Psoas muscle (tissue), 8 donors: ENCODE measurements at regions of chr15 and their contacts with region 1.

Region 1: DNA sequence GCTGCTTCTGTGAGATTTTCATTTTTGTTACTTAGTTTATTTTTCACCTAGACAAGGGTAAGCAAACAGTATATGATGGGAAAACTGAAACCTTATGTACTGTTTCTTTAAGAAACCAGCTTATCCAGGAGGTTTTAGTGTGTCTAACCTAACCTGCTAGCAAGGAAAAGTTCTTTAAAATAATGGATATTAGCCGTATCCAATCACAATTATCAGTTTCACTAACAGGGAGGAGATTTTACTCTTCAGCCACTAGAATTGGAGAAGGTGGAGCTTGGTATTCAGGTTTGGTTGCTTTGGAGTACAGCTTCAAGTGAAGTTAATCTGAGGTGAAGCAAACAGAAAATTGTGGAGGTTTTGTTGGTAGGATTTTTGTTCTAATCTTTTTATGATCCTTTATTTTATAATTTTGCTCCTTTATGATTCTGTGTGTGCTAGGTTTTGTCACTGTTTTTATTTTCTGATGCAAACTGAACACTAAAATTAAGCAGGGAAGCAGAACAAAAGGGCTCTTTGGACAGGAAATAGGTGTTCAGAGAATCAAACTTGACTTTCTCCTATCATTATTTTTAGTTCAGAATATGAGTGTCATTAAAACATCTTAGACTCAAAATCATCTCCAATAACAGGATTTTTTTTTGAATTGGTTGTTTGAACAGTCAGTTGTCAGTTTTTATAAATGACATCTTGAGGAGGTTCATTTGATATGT is 13.0 kb downstream of the ZFAND6 start:
- DNase-seq: no peak
- ATAC-seq: peak; percentile 93 to 98 (median 97)
- H3K4me3 ChIP-seq: peak overlapping the region; percentile 60
- H3K27ac ChIP-seq: peak overlapping the region; percentile 11
- H3K4me1 ChIP-seq: peaks cover 71% of the 10 kb centered on the region
- H3K27me3 ChIP-seq: no peaks in the 10 kb centered on the region
- CTCF ChIP-seq: no peak

Region 2: GRCh38 chr15:80058851-80059785 is 13.3 kb before region 1 on chr15 and contains the start of gene ZFAND6:
- intact Hi-C with region 1: loop called in 1 of 2 experiments (anchors 1 kb)
- DNase-seq: peak; percentile 95 to 98
- ATAC-seq: peak; percentile 97 to 98 (median 98)
- H3K4me3 ChIP-seq: peak within 1 kb of the TSS; percentile 84
- H3K27ac ChIP-seq: peak within 1 kb of the TSS; percentile 97
- H3K4me1 ChIP-seq: peaks cover 25% of the 10 kb centered on the region
- H3K27me3 ChIP-seq: no peaks in the 10 kb centered on the region
- CTCF ChIP-seq: no peak
- total RNA-seq, gene ZFAND6: 66.3 to 102 (median 86.8) TPM

Region 3: DNA sequence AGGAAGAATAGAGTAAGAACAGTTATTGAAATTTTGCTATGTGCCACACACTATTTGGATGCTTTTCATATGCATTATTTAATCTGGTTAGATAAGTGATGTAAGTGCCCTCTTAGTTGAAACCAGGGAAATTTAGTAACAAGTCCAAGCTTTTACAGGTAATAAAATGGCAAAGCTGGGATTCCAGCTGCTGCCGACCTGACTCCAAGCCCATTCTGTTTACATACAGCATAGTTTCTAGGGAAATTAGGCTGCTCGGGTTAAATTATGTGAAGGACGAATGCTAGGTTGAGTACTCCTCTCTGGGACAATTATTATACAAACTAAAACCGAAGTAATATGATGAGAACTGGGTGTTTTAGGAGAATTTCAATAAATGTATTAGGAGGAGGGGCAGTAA is 41.7 kb after region 1 on chr15:
- intact Hi-C with region 1: loop called in 1 of 2 experiments (anchors 2 kb)
- DNase-seq: no peak
- ATAC-seq: no peak
- H3K4me3 ChIP-seq: no peak overlapping the region
- H3K27ac ChIP-seq: no peak overlapping the region
- H3K4me1 ChIP-seq: peaks cover 48% of the 10 kb centered on the region
- H3K27me3 ChIP-seq: no peaks in the 10 kb centered on the region
- CTCF ChIP-seq: no peak

Region 4: DNA sequence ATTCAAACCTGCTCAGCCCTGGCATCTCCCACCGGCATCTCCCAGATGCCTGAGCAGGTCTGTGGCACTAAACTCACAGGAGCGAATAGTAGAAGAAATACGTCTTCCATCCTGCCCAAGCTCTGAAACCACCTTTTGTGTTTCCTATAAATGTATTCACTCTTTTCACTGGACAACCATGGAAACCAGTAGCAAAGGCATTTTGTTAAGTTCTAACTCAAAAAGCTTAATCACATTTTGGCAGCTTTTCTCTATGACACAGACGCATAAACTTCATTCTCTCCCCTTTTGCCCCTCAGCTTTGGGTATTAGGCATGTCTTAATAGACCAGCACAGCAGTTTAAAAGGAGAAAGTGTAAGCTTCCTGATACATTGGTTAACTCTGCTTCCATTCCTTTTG is 307.3 kb after region 1 on chr15:
- intact Hi-C with region 1: no loop called
- DNase-seq: no peak
- ATAC-seq: no peak
- H3K4me3 ChIP-seq: no peak overlapping the region
- H3K27ac ChIP-seq: no peak overlapping the region
- H3K4me1 ChIP-seq: peaks cover 19% of the 10 kb centered on the region
- H3K27me3 ChIP-seq: no peaks in the 10 kb centered on the region
- CTCF ChIP-seq: no peak